MCF 10A (cell line): ENCODE measurements at regions of chr14 and their contacts with region 1.

Region 1: GRCh38 chr14:70027785-70028428 is 148.7 kb downstream of the SMOC1 start:
- DNase-seq: peak; percentile 64
- H3K4me3 Mint-ChIP-seq: no peak overlapping the region
- H3K27ac Mint-ChIP-seq: no peak overlapping the region
- H3K4me1 Mint-ChIP-seq: peaks cover 8% of the 10 kb centered on the region
- H3K27me3 Mint-ChIP-seq: no peaks in the 10 kb centered on the region
- CTCF ChIP-seq: peak; percentile 95

Region 2: GRCh38 chr14:69171580-69171979 is 856.3 kb before region 1 on chr14:
- CTCF ChIA-PET with region 1: no interaction called
- POLR2A ChIA-PET with region 1: no interaction called
- intact Hi-C with region 1: no loop called
- DNase-seq: no peak
- H3K4me3 Mint-ChIP-seq: no peak overlapping the region
- H3K27ac Mint-ChIP-seq: no peak overlapping the region
- H3K4me1 Mint-ChIP-seq: no peaks in the 10 kb centered on the region
- H3K27me3 Mint-ChIP-seq: no peaks in the 10 kb centered on the region
- CTCF ChIP-seq: no peak

Region 3: GRCh38 chr14:69726761-69727511 is 301.0 kb before region 1 on chr14:
- CTCF ChIA-PET with region 1: interaction called, 11 read pairs
- POLR2A ChIA-PET with region 1: no interaction called
- intact Hi-C with region 1: no loop called
- DNase-seq: peak; percentile 79
- H3K4me3 Mint-ChIP-seq: peak overlapping the region; percentile 59
- H3K27ac Mint-ChIP-seq: no peak overlapping the region
- H3K4me1 Mint-ChIP-seq: peaks cover 6% of the 10 kb centered on the region
- H3K27me3 Mint-ChIP-seq: no peaks in the 10 kb centered on the region
- CTCF ChIP-seq: peak; percentile 94

Region 4: DNA sequence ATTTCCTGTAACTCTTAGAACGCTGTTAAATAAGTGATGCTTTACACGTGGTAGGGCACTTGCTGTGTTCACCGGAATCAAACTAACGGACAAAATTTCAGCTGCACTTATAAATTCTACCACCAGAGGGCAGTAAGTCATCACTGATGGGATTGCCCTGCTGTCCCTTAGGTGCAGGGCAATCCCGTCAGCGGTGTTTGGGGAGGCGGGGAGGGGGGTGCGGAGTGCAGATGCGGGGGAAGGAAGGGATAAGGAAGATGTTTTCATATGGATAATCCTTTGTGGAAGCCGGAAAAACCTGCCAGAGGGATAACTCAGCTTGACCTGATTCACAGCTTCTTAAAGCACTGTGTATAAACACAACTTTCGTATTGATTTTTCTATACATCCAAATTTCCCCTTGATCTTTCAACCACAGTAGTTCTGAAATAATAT is 209.1 kb before region 1 on chr14:
- CTCF ChIA-PET with region 1: interaction called, 77 read pairs
- POLR2A ChIA-PET with region 1: interaction called, 5 read pairs
- intact Hi-C with region 1: loop called (anchors 1 kb)
- DNase-seq: peak; percentile 74
- H3K4me3 Mint-ChIP-seq: no peak overlapping the region
- H3K27ac Mint-ChIP-seq: no peak overlapping the region
- H3K4me1 Mint-ChIP-seq: no peaks in the 10 kb centered on the region
- H3K27me3 Mint-ChIP-seq: no peaks in the 10 kb centered on the region
- CTCF ChIP-seq: peak; percentile 82

Region 5: DNA sequence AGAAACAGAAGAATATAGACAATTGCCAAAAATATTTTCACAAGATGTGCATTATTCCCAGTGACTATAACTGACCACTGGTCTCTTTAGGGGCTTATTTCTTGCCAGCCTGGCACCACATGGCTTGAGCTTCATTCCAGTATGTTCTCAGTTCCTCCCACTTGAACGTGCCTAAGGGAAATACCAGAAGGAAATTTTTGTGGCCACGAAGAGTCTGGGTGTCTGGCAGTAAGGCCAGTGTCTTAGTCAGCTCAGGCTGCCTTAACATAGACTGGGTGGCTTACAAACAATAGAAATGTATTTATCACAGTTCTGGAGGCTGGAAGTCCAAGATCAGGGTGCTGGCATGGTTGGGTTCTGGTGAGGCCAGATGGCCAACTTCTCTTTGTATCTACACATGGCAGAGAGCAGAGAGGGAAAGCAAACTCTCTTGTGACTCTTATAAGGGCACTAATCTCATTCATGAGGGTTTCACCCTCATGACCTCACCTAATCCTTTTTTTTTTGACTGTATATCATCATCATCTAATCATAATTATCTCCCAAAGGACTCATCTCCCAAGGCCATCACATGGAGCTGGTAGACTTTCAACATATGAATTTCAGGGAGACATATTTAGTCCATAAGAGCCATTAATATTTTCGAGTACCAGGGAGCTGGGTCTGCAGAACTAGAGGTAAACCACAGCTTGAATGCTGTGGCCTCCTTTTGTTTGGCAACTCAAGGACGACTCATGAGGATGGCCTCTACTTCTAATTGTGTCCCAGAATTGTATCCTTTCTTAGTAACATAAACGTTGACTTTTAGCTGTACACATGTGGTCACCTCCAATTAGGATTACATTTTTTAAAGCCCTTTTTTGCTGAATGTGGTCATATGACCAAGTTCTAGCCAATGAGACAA is 153.8 kb before region 1 on chr14:
- CTCF ChIA-PET with region 1: interaction called, 36 read pairs
- POLR2A ChIA-PET with region 1: interaction called, 3 read pairs
- intact Hi-C with region 1: loop called (anchors 1 kb)
- DNase-seq: no peak
- H3K4me3 Mint-ChIP-seq: no peak overlapping the region
- H3K27ac Mint-ChIP-seq: no peak overlapping the region
- H3K4me1 Mint-ChIP-seq: peaks cover 9% of the 10 kb centered on the region
- H3K27me3 Mint-ChIP-seq: no peaks in the 10 kb centered on the region
- CTCF ChIP-seq: no peak

Region 6: GRCh38 chr14:69887740-69888657 is 139.9 kb before region 1 on chr14:
- CTCF ChIA-PET with region 1: interaction called, 11 read pairs
- POLR2A ChIA-PET with region 1: no interaction called
- intact Hi-C with region 1: no loop called
- DNase-seq: peak; percentile 58
- H3K4me3 Mint-ChIP-seq: peak overlapping the region; percentile 12
- H3K27ac Mint-ChIP-seq: peak overlapping the region; percentile 44
- H3K4me1 Mint-ChIP-seq: peaks cover 41% of the 10 kb centered on the region
- H3K27me3 Mint-ChIP-seq: no peaks in the 10 kb centered on the region
- CTCF ChIP-seq: no peak

Region 7: DNA sequence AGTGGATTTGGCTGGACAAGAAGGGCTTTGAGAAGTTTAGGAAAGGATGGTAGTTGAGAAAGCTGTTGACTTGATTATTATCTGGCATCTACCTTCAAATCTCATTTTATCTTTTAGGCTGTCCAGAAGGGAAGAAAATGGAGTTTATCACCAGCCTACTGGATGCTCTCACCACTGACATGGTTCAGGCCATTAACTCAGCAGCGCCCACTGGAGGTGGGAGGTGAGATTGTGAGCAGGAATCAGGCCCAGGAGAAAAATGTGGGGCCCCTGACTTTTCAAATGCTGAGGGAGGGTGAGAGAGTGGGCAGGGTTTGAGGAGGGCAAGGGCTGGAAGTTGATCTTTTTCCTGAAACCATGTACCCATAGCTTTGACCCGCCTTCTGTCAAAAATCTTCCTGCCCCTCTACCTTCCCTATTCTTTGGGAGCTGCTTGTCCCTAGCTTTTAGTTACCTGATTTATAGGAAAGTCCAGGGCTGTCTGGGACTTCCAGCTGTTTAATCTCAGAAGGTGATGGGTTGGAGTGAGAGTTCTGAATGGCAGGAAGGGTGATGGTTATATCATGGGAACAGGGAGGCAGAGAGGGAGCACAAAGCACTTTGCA is 14.5 kb before region 1 on chr14:
- CTCF ChIA-PET with region 1: interaction called, 18 read pairs
- POLR2A ChIA-PET with region 1: interaction called, 4 read pairs
- intact Hi-C with region 1: no loop called
- DNase-seq: peak; percentile 75
- H3K4me3 Mint-ChIP-seq: no peak overlapping the region
- H3K27ac Mint-ChIP-seq: peak overlapping the region; percentile 28
- H3K4me1 Mint-ChIP-seq: peaks cover 17% of the 10 kb centered on the region
- H3K27me3 Mint-ChIP-seq: no peaks in the 10 kb centered on the region
- CTCF ChIP-seq: peak; percentile 83

Region 8: GRCh38 chr14:70073924-70074566 is 46.1 kb after region 1 on chr14:
- CTCF ChIA-PET with region 1: interaction called, 8 read pairs
- POLR2A ChIA-PET with region 1: no interaction called
- intact Hi-C with region 1: loop called (anchors 5 kb)
- DNase-seq: peak; percentile 86
- H3K4me3 Mint-ChIP-seq: no peak overlapping the region
- H3K27ac Mint-ChIP-seq: no peak overlapping the region
- H3K4me1 Mint-ChIP-seq: no peaks in the 10 kb centered on the region
- H3K27me3 Mint-ChIP-seq: peaks cover 35% of the 10 kb centered on the region
- CTCF ChIP-seq: peak; percentile 92